Activated CD4-positive, alpha-beta T cell treated with anti-CD3 and anti-CD28 coated beads for 36 hours (primary cell): ENCODE measurements at regions of chr1 and their contacts with region 1.

Region 1: GRCh38 chr1:19715334-19716203 is 50.9 kb downstream of the HTR6 start:
- DNase-seq: peak; percentile 95
- ATAC-seq: peak; percentile 77
- H3K4me3 Mint-ChIP-seq: no peak overlapping the region
- H3K27ac Mint-ChIP-seq: no peak overlapping the region
- H3K4me1 Mint-ChIP-seq: peaks cover 30% of the 10 kb centered on the region
- H3K27me3 Mint-ChIP-seq: no peaks in the 10 kb centered on the region

Region 2: DNA sequence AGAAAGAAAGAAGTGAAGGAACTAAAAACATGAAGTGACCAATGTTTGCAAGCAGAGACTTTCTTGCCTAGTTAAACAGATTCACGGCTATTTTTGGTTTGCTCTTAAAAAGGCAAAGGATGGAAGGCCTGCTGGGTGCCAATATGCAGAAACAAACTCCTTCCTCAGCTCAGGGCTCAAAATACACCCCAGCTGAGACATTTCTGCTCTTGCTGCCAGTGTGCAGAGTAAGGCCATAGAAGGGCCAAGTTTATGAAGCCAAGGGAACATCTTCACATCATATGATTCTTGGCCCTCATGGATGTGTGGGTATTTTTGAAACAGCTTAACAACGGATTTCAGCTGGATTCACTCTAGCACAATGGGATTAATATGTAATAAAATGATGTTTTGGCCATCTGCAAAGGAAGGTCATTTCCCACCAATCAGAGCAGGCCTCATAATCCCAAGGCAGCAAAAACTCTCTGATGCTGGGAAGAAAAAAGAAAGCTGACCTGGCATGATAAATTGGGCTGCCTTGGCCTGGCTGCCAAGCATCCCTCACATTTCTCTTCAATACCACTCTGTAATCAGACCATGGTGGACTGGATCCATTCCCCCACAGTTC is 301.0 kb before region 1 on chr1:
- CTCF ChIA-PET with region 1: no interaction called
- POLR2A ChIA-PET with region 1: no interaction called
- intact Hi-C with region 1: loop called in 1 of 2 experiments (anchors 1 kb)
- DNase-seq: no peak
- ATAC-seq: no peak
- H3K4me3 Mint-ChIP-seq: no peak overlapping the region
- H3K27ac Mint-ChIP-seq: no peak overlapping the region
- H3K4me1 Mint-ChIP-seq: peaks cover 60% of the 10 kb centered on the region
- H3K27me3 Mint-ChIP-seq: no peaks in the 10 kb centered on the region

Region 3: DNA sequence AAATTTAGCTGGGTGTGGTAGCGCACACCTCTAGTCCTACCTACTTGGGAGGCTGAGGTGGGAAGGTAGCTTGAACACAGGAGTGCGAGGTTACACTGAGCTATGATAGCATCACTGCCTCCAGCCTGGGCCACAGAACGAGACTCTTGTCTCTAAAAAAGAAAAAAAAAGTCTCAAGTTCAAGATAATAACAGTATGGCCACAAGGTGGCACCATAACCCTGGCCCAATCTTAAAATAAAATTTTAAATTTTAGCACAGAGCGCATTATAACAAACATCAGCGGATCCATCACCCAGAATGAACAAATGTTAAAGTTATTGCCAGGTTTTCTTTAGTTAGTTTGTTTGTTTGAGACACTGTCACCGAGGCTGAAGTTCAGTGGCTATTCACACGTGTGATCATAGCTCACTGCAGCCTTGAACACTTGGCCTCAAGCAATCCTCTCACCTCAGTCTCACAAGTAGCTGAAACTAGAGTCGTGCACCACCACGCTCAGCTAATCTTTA is 53.8 kb before region 1 on chr1:
- CTCF ChIA-PET with region 1: interaction called, 11 read pairs
- POLR2A ChIA-PET with region 1: no interaction called
- intact Hi-C with region 1: loop called in 1 of 2 experiments (anchors 2 kb)
- DNase-seq: peak; percentile 69
- ATAC-seq: no peak
- H3K4me3 Mint-ChIP-seq: no peak overlapping the region
- H3K27ac Mint-ChIP-seq: no peak overlapping the region
- H3K4me1 Mint-ChIP-seq: peaks cover 26% of the 10 kb centered on the region
- H3K27me3 Mint-ChIP-seq: peaks cover 17% of the 10 kb centered on the region

Region 4: DNA sequence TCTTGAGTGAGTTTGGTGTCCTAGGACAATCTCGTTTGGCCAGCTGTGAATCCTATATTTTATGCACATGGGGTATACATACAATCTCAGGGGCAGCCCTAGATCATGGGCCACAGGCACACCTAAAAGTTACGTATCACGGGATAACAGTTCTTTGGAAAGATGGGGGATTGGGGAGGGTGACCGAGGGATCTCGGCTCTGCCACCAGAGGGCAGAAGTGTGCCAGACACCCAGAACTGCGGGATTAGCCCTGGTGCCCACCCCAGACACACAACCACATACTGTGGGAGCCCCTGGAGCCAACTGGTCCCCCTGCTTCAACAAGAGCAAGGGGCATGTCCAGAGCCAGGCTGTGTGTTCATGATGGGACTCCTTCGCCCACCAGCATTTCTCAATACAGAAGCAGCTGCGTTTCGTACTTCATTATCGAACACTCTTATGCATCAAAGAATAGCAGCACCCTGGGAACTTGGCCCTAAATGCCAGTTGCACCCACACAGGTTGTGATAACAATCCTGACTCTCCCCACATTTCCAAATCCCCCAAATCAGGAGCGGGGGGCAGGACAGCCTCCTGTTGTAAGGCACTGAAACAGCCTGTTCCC is 46.7 kb after region 1 on chr1:
- CTCF ChIA-PET with region 1: interaction called, 4 read pairs
- POLR2A ChIA-PET with region 1: interaction called, 5 read pairs
- intact Hi-C with region 1: loop called (anchors 1 to 2 kb)
- DNase-seq: peak; percentile 62
- ATAC-seq: no peak
- H3K4me3 Mint-ChIP-seq: no peak overlapping the region
- H3K27ac Mint-ChIP-seq: no peak overlapping the region
- H3K4me1 Mint-ChIP-seq: peaks cover 19% of the 10 kb centered on the region
- H3K27me3 Mint-ChIP-seq: no peaks in the 10 kb centered on the region

Region 5: DNA sequence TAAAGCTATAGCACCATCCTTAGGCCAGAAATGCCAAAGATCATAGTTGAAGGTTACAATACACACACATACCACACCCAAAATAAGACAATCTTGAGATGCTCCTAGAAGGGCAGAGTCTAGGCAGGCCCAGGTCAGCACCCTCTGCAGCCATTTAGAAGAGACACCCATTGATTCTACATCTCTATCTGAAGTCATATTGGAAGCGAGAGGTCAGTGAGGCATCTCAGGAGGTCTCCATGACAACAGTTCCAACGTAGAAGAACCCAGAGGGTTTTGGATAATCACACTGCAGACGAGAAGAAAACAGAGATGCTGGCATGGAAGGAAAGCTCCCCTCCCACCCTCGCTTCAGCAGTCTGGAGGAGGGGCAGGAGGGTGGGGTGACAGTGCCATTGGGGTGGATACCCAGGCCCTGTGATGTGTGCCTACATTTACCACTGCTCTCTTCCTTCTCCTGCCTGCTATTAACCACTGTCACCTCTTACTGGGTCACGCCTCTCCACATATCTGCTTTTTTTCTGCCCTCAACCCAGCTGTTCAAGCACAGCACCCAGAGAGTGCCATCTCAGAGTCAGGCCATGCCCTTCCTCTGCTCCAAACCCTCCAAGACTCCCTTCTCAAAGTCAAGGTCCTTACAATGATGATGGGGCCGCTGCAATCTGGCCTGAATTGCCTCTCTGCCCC is 77.9 kb after region 1 on chr1:
- CTCF ChIA-PET with region 1: no interaction called
- POLR2A ChIA-PET with region 1: no interaction called
- intact Hi-C with region 1: no loop called
- DNase-seq: no peak
- ATAC-seq: peak; percentile 65
- H3K4me3 Mint-ChIP-seq: no peak overlapping the region
- H3K27ac Mint-ChIP-seq: no peak overlapping the region
- H3K4me1 Mint-ChIP-seq: peaks cover 29% of the 10 kb centered on the region
- H3K27me3 Mint-ChIP-seq: no peaks in the 10 kb centered on the region

Region 6: DNA sequence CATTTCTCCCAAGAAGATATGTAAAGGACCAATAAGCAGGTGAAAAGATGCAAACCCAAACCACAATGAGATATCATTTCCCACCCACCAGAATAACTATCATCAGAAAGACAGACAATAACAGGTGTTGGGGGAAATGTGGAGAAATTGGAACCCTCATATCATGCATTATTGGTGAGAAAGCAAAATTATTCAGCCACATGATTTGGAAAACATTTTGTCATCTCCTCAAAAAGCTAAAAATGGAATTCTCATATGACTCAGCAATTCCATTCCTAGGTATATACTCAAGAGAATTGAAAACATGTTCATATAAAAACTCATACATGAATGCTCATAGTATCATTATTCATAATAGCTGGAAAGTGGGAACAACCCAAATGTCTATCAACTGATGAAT is 124.7 kb after region 1 on chr1:
- CTCF ChIA-PET with region 1: no interaction called
- POLR2A ChIA-PET with region 1: no interaction called
- intact Hi-C with region 1: loop called in 1 of 2 experiments (anchors 1 kb)
- DNase-seq: no peak
- ATAC-seq: peak; percentile 47
- H3K4me3 Mint-ChIP-seq: no peak overlapping the region
- H3K27ac Mint-ChIP-seq: no peak overlapping the region
- H3K4me1 Mint-ChIP-seq: peaks cover 18% of the 10 kb centered on the region
- H3K27me3 Mint-ChIP-seq: peaks cover 35% of the 10 kb centered on the region

Region 7: DNA sequence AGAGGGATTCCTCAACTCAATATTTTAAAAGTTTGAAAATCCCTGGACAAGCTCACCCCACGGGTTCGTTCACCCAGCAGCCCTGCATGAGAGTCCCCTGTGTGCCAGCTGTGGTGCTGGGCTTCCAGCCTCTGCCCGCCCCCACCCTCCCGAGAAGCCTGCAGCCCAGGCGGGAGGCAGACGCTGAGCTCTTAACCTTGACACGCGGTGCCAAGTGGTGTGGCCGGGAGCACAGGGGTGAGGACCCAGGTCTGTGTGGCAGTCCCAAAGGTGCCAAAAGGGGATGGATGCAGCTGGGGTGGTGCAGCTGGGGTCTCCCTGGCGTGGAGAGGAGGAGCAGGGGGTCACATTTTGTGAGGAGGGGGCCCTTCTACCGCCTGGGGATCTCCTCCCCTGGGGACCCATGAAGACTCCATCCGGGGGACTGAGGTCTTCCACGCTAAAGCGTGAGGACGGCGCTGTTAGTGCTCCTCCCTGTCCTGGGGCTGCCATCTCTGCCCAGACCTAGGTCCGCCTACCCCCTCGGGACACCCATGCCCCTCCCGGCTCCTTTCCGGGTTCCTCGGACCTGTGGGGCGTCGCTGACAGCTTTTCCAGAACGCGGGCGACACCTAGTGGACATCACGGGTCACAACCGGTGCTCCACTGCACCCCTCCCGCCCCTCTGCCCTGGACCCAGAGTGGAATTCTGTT is 436.5 kb after region 1 on chr1:
- CTCF ChIA-PET with region 1: no interaction called
- POLR2A ChIA-PET with region 1: no interaction called
- intact Hi-C with region 1: loop called in 1 of 2 experiments (anchors 10 kb)
- DNase-seq: peak; percentile 88
- ATAC-seq: peak; percentile 97
- H3K4me3 Mint-ChIP-seq: peak overlapping the region; percentile 48
- H3K27ac Mint-ChIP-seq: no peak overlapping the region
- H3K4me1 Mint-ChIP-seq: peaks cover 9% of the 10 kb centered on the region
- H3K27me3 Mint-ChIP-seq: no peaks in the 10 kb centered on the region